Activated CD8-positive, alpha-beta memory T cell treated with anti-CD3 and anti-CD28 coated beads, Interleukin-2, amount 10 ng/mL, durations not matched to agents 7 days and 5 days (primary cell): ENCODE measurements at regions of chr7 and their contacts with region 1.

Region 1: DNA sequence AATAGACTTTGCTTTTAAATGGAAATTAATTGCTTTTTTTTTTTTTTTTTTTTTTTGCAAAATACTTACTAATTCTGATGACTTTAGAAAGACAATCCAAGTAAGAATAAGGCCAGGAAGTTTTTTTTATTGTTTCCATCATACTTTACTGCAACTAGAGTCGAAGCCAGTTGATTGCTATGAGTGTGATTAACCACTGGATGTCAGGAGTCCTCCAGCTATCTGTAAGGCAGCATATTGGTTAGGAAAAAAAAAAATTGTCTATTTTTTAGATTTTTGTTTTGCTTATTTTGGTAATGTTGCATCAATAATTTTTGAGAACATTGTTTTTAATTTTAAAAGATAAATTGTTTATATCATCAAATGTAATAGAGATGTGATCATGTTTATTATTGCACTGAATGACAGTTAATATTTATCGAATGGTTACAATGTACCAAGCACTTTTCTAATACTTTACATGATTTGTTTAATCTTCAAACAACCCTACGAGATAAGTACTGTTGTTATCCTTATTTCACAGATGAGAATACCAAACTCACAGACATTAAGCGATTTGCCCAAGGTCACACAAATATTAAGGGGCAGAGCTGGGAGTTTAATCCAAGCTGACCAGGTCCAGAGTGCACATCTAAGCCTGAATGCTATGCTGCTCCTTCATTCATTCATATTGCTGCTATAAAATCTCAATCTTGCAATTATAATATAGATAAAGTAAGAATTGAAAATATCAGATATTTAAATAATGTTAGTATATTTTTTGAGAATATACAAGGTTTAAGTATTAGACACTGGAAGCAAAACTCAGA is 19.9 kb upstream of the LMOD2 start:
- DNase-seq: no peak
- ATAC-seq: no peak
- H3K4me3 Mint-ChIP-seq: no peak overlapping the region
- H3K27ac Mint-ChIP-seq: no peak overlapping the region
- H3K4me1 Mint-ChIP-seq: no peaks in the 10 kb centered on the region
- H3K27me3 Mint-ChIP-seq: peaks cover 21% of the 10 kb centered on the region

Region 2: DNA sequence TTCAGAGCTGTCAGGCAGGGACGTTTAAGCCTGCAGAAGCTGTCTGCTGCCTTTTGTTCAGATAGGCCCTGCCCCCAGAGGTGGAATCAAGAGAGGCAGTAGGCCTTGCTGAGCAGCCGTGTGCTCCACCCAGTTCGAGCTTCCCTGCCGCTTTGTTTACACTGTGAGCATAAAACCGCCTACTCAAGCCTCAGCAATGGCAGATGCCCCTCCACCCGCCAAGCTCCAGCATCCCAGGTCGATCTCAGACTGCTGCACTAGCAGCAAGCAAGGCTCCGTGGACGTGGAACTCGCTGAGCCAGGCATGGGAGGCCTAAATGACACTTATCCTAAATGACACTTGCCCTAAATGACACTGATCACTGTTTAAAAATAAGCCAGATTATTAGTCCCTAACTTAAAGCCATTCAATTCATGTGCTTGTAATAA is 40.9 kb before region 1 on chr7:
- CTCF ChIA-PET with region 1: no interaction called
- DNase-seq: no peak
- ATAC-seq: no peak
- H3K4me3 Mint-ChIP-seq: no peak overlapping the region
- H3K27ac Mint-ChIP-seq: no peak overlapping the region
- H3K4me1 Mint-ChIP-seq: no peaks in the 10 kb centered on the region
- H3K27me3 Mint-ChIP-seq: peaks cover 35% of the 10 kb centered on the region

Region 3: GRCh38 chr7:123624527-123625183 is 11.1 kb before region 1 on chr7:
- CTCF ChIA-PET with region 1: interaction called, 12 read pairs
- DNase-seq: peak; percentile 75
- ATAC-seq: peak; percentile 64
- H3K4me3 Mint-ChIP-seq: no peak overlapping the region
- H3K27ac Mint-ChIP-seq: no peak overlapping the region
- H3K4me1 Mint-ChIP-seq: peaks cover 3% of the 10 kb centered on the region
- H3K27me3 Mint-ChIP-seq: peaks cover 3% of the 10 kb centered on the region

Region 4: GRCh38 chr7:123871998-123872867 is 236.5 kb after region 1 on chr7:
- CTCF ChIA-PET with region 1: interaction called, 10 read pairs
- DNase-seq: peak; percentile 59
- ATAC-seq: peak; percentile 81
- H3K4me3 Mint-ChIP-seq: no peak overlapping the region
- H3K27ac Mint-ChIP-seq: no peak overlapping the region
- H3K4me1 Mint-ChIP-seq: no peaks in the 10 kb centered on the region
- H3K27me3 Mint-ChIP-seq: peaks cover 3% of the 10 kb centered on the region